ENCODE measurements at regions of chr2 and their contacts with region 1.

Region 1: GRCh38 chr2:6352906-6353515 is 512.7 kb downstream of the CMPK2 start:
- DNase-seq: peak; percentile 56 to 69
- H3K4me3 ChIP-seq: no peak overlapping the region
- H3K4me3 Mint-ChIP-seq: no peak overlapping the region
- H3K27ac Mint-ChIP-seq: no peak overlapping the region
- H3K4me1 ChIP-seq: no peaks in the 10 kb centered on the region
- H3K4me1 Mint-ChIP-seq: no peaks in the 10 kb centered on the region
- H3K27me3 ChIP-seq: no peaks in the 10 kb centered on the region
- H3K27me3 Mint-ChIP-seq: no peaks in the 10 kb centered on the region
- CTCF ChIP-seq: peak; percentile 53 to 69

Region 2: GRCh38 chr2:6482256-6482655 is 129.2 kb after region 1 on chr2:
- CTCF ChIA-PET with region 1: no interaction called
- POLR2A ChIA-PET with region 1: no interaction called
- intact Hi-C with region 1: no loop called
- DNase-seq: no peak
- H3K4me3 ChIP-seq: no peak overlapping the region
- H3K4me3 Mint-ChIP-seq: no peak overlapping the region
- H3K27ac Mint-ChIP-seq: no peak overlapping the region
- H3K4me1 ChIP-seq: no peaks in the 10 kb centered on the region
- H3K4me1 Mint-ChIP-seq: no peaks in the 10 kb centered on the region
- H3K27me3 ChIP-seq: no peaks in the 10 kb centered on the region
- H3K27me3 Mint-ChIP-seq: no peaks in the 10 kb centered on the region
- CTCF ChIP-seq: no peak

Region 3: GRCh38 chr2:6773007-6773693 is 420.1 kb after region 1 on chr2:
- CTCF ChIA-PET with region 1: no interaction called
- POLR2A ChIA-PET with region 1: no interaction called
- intact Hi-C with region 1: loop called (anchors 1 kb)
- DNase-seq: peak; percentile 58 to 80
- H3K4me3 ChIP-seq: no peak overlapping the region
- H3K4me3 Mint-ChIP-seq: no peak overlapping the region
- H3K27ac Mint-ChIP-seq: no peak overlapping the region
- H3K4me1 ChIP-seq: no peaks in the 10 kb centered on the region
- H3K4me1 Mint-ChIP-seq: no peaks in the 10 kb centered on the region
- H3K27me3 ChIP-seq: no peaks in the 10 kb centered on the region
- H3K27me3 Mint-ChIP-seq: peaks cover 6% of the 10 kb centered on the region
- CTCF ChIP-seq: peak; percentile 91 to 97

Measured in Caco-2 (cell line).